BJ (cell line): ENCODE measurements at regions of chr6 and their contacts with region 1.

Region 1: GRCh38 chr6:43667245-43668150 is 20.1 kb downstream of the MRPS18A start:
- DNase-seq: no peak
- H3K4me3 ChIP-seq: no peak overlapping the region
- H3K27me3 ChIP-seq: no peaks in the 10 kb centered on the region
- CTCF ChIP-seq: peak; percentile 98

Region 2: DNA sequence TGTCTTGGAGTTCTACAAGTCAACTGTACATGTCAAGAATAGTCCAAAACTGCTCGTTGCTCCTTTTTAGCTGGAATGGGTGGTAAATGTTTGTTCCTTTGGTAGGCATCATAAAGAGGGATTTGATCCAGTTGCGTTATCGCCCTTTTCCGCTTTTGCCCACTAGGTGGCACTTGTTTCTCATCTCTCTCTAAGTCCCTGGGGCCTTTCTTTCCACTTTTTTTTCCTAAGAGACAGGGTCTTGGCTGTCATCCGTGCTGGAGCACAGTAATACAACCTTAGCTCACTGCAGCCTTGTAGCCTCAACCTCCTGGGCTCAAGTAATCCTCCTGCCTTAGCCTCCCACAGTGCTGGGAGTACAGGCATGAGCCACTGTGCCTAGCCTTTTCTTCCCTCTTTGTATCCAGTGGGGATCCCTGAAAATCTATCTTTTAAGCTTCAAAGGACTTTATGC is 59.2 kb before region 1 on chr6:
- CTCF ChIA-PET with region 1: interaction called, 15 read pairs
- POLR2A ChIA-PET with region 1: no interaction called
- DNase-seq: no peak
- H3K4me3 ChIP-seq: no peak overlapping the region
- H3K27me3 ChIP-seq: no peaks in the 10 kb centered on the region
- CTCF ChIP-seq: peak; percentile 85

Region 3: DNA sequence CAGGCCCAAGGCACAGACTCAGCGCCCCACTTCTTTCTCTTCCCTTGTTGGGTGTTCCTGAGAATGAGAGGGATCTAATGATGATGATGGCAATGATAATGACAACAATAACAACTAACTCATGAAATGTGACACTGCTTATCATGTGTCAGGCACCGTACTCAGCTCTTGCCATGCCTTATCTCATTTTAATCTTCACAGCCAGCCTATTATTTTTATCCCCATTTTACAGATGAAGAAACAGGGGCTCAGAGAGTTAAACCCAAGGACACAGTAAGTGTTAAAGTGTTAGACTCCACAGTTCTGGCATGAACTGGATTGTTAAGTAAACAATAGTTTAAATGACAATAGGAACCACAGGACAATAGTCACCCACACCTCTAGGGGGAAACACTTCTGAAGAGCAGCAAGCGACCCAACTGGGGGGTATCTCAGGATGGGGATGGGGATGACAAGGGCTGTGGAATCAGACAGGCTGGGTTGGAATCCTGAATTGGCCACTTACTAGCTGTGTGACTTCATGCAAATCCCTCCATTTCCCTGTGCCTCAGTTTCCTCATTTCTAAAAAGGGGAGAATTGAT is 10.2 kb before region 1 on chr6:
- CTCF ChIA-PET with region 1: interaction called, 16 read pairs
- POLR2A ChIA-PET with region 1: no interaction called
- DNase-seq: no peak
- H3K4me3 ChIP-seq: no peak overlapping the region
- H3K27me3 ChIP-seq: no peaks in the 10 kb centered on the region
- CTCF ChIP-seq: no peak

Region 4: DNA sequence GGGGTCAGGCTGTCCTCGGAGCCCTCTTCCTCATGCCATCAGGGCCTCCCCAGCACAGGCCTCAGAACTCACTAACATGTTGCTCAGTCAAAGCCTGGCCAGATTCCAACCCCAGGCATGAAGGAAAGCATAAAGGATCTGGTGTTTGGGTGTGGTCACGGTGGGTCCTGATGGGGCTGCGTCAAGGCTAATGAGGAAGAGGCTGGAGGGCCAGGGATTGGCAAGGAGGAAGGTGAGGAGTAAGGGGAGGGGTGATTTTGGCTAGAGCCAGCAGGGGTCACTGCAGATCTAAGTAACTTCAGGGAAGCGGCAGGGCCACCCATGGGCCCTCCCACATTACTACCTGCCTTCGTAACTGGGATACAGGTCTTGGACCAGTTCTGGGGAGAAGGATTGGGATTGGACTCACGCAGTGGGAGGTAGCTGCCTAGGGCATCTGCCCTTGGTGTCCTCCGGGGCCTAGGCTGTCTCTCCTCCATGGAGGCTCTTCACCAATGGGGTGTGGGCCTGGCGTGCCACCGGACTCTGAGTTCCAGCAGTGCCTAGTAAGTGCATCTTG is 56.3 kb after region 1 on chr6:
- CTCF ChIA-PET with region 1: interaction called, 10 read pairs
- POLR2A ChIA-PET with region 1: no interaction called
- DNase-seq: no peak
- H3K4me3 ChIP-seq: no peak overlapping the region
- H3K27me3 ChIP-seq: peaks cover 7% of the 10 kb centered on the region
- CTCF ChIP-seq: peak; percentile 59

Region 5: DNA sequence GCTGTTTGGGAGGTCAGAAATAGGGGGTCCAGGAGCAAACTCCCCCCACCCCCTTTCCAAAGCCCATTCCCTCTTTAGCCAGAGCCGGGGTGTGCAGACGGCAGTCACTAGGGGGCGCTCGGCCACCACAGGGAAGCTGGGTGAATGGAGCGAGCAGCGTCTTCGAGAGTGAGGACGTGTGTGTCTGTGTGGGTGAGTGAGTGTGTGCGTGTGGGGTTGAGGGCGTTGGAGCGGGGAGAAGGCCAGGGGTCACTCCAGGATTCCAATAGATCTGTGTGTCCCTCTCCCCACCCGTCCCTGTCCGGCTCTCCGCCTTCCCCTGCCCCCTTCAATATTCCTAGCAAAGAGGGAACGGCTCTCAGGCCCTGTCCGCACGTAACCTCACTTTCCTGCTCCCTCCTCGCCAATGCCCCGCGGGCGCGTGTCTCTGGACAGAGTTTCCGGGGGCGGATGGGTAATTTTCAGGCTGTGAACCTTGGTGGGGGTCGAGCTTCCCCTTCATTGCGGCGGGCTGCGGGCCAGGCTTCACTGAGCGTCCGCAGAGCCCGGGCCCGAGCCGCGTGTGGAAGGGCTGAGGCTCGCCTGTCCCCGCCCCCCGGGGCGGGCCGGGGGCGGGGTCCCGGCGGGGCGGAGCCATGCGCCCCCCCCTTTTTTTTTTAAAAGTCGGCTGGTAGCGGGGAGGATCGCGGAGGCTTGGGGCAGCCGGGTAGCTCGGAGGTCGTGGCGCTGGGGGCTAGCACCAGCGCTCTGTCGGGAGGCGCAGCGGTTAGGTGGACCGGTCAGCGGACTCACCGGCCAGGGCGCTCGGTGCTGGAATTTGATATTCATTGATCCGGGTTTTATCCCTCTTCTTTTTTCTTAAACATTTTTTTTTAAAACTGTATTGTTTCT is 102.3 kb after region 1 on chr6 and contains the start of gene VEGFA:
- CTCF ChIA-PET with region 1: interaction called, 89 read pairs
- POLR2A ChIA-PET with region 1: interaction called, 3 read pairs
- DNase-seq: no peak
- H3K4me3 ChIP-seq: peak within 1 kb of the TSS; percentile 94
- H3K27me3 ChIP-seq: peaks cover 3% of the 10 kb centered on the region; the same call in 1 of the 2 replicates
- CTCF ChIP-seq: peak; percentile 100
- polyA plus RNA-seq, gene VEGFA: 197 and 357 TPM in 2 replicates

Region 6: GRCh38 chr6:44086931-44087574 is 419.6 kb after region 1 on chr6:
- CTCF ChIA-PET with region 1: interaction called, 15 read pairs
- POLR2A ChIA-PET with region 1: no interaction called
- DNase-seq: no peak
- H3K4me3 ChIP-seq: no peak overlapping the region
- H3K27me3 ChIP-seq: no peaks in the 10 kb centered on the region
- CTCF ChIP-seq: no peak

Region 7: GRCh38 chr6:44524476-44525227 is 857.2 kb after region 1 on chr6:
- CTCF ChIA-PET with region 1: no interaction called
- POLR2A ChIA-PET with region 1: no interaction called
- DNase-seq: no peak
- H3K4me3 ChIP-seq: no peak overlapping the region
- H3K27me3 ChIP-seq: peaks cover 10% of the 10 kb centered on the region
- CTCF ChIP-seq: no peak